Naive thymus-derived CD4-positive, alpha-beta T cell (primary cell): ENCODE measurements at regions of chr1 and their contacts with region 1.

Region 1: DNA sequence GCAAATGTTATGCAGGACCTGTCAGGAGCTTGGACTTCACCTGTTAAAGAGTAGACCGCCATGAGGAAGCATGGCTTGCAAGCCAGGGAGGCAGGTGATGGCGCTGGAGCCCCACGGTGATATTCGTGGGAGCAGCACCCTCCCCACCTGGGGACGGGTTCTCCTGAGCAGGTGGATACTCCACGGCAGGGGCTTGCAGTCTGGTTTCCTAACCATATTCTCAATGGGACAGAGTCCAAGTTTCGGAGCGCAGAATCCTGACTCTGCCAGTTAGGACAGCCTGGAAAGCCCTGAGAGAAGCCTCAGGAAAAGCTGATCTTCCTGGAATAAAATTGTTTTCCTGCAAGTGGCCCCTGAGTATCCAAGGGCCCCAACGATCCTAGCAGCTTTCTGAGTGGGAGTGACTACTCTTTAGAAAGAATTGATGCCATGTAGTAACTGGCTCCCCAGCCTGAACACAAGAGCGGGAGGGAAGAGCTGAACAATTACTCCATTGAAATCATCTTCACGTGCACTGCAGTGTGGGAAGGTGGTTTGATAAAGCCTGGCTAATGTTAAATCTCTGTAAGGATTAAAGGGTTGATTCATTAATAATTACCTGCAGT is 146.3 kb upstream of the RAB4A start:
- DNase-seq: no peak
- ATAC-seq: no peak
- H3K4me3 ChIP-seq: no peak overlapping the region
- H3K4me3 Mint-ChIP-seq: no peak overlapping the region
- H3K27ac ChIP-seq: no peak overlapping the region
- H3K27ac Mint-ChIP-seq: peak overlapping the region in 1 of 9 donors; percentile 8
- H3K4me1 ChIP-seq: peaks cover 24 to 25% of the 10 kb centered on the region in 2 donors
- H3K4me1 Mint-ChIP-seq: peaks cover 17 to 40% (median 30%) of the 10 kb centered on the region in 7 donors
- H3K27me3 ChIP-seq: no peaks in the 10 kb centered on the region
- H3K27me3 Mint-ChIP-seq: peaks cover 0 to 42% (median 0%) of the 10 kb centered on the region in 5 donors

Region 2: DNA sequence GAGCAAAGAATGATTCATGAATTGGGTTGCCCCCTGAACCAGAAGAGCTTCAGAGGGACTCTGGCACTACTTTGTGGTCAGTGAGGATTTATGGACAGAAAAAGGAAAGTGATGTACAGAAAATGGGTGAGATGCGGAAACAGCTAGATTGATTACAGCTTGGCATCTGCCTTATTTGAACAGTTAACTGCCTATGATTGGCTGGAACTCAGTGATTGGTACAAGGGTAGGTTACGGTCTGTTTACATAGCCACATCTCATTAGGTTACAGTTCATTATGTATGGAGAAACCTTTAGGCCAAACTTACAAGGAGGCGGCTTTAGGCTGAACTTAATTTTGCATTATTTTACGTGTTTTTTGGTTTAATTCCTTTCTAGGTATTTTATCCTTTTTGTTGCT is 418.3 kb before region 1 on chr1:
- CTCF ChIA-PET with region 1: no interaction called
- POLR2A ChIA-PET with region 1: no interaction called
- intact Hi-C with region 1: no loop called
- DNase-seq: no peak
- ATAC-seq: no peak
- H3K4me3 ChIP-seq: no peak overlapping the region
- H3K4me3 Mint-ChIP-seq: no peak overlapping the region
- H3K27ac ChIP-seq: no peak overlapping the region
- H3K27ac Mint-ChIP-seq: no peak overlapping the region
- H3K4me1 ChIP-seq: no peaks in the 10 kb centered on the region
- H3K4me1 Mint-ChIP-seq: no peaks in the 10 kb centered on the region
- H3K27me3 ChIP-seq: no peaks in the 10 kb centered on the region
- H3K27me3 Mint-ChIP-seq: peaks cover 0 to 13% (median 4%) of the 10 kb centered on the region in 5 donors

Region 3: DNA sequence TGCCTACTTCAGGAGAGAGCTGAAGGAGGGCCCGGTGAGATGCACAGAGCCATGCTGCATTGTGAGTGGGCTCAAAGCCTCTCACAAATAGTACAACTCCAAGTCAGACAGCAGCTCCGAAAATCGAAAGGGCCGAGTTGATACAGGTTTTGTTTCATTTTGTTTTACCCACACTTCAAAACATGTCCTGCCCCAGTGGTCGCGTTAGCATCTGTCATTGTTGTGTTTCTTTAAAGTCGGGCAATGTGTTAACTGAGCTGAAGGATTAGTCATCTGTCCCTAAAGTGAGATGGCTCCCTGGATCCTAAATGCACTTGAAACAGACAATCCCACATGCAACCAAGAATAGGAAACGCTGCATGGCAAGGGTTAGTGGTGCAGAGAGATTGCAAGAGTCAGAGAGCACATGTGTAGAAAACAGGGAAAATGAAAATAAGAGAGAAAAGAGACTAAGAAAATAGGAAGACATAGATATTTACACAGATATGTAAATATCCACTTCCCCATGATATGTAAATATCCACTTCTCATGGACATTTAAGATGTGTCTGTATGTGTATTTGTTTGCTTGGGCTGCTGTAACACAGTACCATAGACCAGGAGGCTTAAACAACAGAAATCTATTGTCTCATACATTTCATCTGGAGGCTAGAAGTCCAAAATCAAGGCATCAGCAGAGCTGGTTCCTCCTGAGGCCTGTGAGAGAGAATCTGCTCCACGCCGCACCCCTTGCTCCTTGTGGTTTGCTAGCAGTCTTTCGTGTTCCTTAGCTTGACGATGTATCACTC is 14.9 kb after region 1 on chr1:
- CTCF ChIA-PET with region 1: interaction called, 7 read pairs
- POLR2A ChIA-PET with region 1: interaction called, 9 read pairs
- intact Hi-C with region 1: loop called in 1 of 2 experiments (anchors 2 kb)
- DNase-seq: peak in 1 of 9 donors; percentile 23
- ATAC-seq: no peak
- H3K4me3 ChIP-seq: peak overlapping the region; percentile 38
- H3K4me3 Mint-ChIP-seq: peak overlapping the region; percentile 60 to 82 (median 72)
- H3K27ac ChIP-seq: no peak overlapping the region
- H3K27ac Mint-ChIP-seq: peak overlapping the region; percentile 35 to 90 (median 55)
- H3K4me1 ChIP-seq: peaks cover 0 to 29% of the 10 kb centered on the region in 2 donors
- H3K4me1 Mint-ChIP-seq: peaks cover 20 to 64% (median 48%) of the 10 kb centered on the region in 7 donors
- H3K27me3 ChIP-seq: no peaks in the 10 kb centered on the region
- H3K27me3 Mint-ChIP-seq: no peaks in the 10 kb centered on the region